Prostate gland (tissue), 2 donors: ENCODE measurements at regions of chr3 and their contacts with region 1.

Region 1: GRCh38 chr3:133927540-133928066 is 31.9 kb upstream of the RAB6B start:
- DNase-seq: peak; percentile 28
- H3K4me3 ChIP-seq: peak overlapping the region; percentile 38 to 49
- H3K27ac ChIP-seq: no peak overlapping the region
- H3K4me1 ChIP-seq: peaks cover 3% of the 10 kb centered on the region
- H3K27me3 ChIP-seq: no peaks in the 10 kb centered on the region
- CTCF ChIP-seq: peak; percentile 69 to 89 (median 84)
- POLR2A ChIP-seq: no peak

Region 2: DNA sequence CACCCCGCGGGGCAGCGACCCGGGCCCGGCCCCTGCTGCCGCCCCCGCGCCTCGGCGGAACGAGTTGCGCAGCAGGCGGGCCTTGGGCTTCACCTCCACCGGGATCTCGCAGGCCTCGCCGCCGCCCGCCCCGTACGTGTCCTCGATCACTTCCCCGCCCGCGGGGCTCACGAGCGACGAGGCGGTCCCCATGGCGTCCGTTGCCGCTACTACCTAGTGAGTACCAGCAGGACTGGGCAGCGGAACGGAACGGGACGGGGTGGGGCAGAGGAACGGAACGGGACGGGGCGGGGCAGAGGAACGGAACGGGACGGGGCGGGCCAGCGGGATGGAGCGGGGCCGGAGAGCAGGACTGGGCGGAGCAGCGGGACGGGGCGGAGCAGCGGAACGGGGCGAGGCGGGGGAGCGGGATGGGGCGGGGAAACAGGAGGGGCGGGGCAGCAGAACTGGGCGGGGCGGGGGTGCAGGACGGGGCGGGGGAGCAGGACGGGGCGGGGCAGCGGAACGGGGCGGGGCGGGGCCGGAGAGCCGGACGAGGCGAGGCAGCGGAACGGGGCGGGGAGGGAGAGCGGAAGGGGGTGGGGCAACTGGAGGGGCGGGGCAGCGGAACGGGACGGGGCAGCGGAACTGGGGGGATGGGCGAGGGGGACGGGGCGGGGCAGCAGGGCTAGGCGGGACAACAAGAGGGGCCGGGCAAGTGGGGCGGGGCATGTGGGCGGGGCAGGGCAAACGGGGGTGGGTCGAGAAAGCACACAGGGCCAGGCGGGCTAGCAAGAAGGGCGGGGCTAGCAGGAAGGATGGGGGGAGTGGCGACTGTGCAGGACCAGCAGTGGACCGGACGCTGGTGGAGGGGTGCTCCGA is 1205.2 kb before region 1 on chr3 and contains the start of gene NPHP3:
- intact Hi-C with region 1: loop called (anchors 10 kb)
- DNase-seq: peak; percentile 97
- H3K4me3 ChIP-seq: peak within 1 kb of the TSS; percentile 81 to 96
- H3K27ac ChIP-seq: peak within 1 kb of the TSS; percentile 90 to 94
- H3K4me1 ChIP-seq: peaks cover 10% of the 10 kb centered on the region
- H3K27me3 ChIP-seq: no peaks in the 10 kb centered on the region
- CTCF ChIP-seq: peak in 2 of 4 experiments; percentile 16 to 40
- POLR2A ChIP-seq: peak; percentile 96
- total RNA-seq, gene NPHP3: 15.1 to 41.1 TPM

Region 3: DNA sequence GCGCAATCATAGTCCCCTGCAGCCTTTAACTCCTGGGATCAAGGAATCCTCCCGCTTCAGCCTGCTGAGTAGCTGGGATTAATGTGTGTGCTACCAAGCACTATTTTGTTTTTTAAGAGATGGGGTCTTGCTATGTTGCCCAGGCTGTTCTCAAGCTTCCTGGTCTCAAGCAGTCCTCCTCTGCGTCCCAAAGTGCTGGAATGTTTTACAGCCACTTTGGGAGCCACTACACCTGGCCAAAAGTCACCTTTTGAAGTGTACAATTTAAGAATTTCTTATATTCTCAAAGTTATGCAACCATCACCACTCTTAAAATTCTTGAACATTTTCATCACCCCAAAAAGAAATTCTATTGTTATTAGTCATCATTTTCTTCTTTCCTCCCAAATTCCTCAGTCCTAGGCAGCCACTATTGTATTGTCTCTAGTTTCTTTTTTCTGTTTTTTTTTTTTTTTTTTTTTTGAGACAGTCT is 336.3 kb before region 1 on chr3:
- intact Hi-C with region 1: no loop called
- DNase-seq: no peak
- H3K4me3 ChIP-seq: no peak overlapping the region
- H3K27ac ChIP-seq: no peak overlapping the region
- H3K4me1 ChIP-seq: peaks cover 8% of the 10 kb centered on the region
- H3K27me3 ChIP-seq: no peaks in the 10 kb centered on the region
- CTCF ChIP-seq: no peak
- POLR2A ChIP-seq: no peak

Region 4: DNA sequence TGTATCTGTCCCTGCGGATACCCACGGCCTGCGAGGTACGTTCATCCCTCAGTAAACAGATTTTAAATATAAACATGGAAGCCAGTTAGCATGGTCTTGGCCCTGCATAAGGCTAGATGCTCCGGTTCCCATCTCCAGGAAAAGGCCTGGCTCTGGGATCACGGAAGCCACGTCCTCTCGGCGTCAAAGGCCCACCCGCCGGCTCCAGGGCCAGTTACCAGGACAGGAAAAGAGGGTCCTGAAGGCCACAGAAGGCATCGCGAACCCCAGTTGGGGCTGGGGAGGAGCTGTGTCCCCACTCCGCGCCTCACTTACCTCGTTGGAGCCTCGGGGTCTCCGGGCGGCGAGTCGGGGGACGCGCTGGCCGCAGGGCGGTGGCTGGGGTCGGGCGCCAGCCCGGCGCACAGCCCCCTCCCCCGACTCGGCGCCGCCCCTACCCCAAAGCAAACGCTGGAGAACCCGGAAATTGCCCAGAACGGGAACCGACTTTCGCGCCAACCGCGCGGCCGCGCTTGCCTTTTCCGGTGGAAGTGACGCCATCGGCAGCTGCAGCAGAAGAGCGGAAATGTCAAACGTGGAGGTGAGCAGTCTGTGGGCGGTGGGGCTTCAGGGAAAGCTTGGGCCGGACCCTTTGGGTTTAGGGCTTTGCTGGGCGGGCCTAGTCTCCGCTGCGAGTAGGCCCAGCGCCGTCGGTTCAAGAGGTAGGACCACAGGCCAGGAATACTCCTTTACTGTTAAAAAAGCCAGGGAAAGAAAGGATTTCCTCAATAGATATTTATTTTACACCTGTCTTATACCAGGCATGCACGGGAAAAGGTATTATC is 265.9 kb before region 1 on chr3 and contains the start of gene TOPBP1:
- intact Hi-C with region 1: loop called (anchors 10 kb)
- DNase-seq: peak; percentile 71
- H3K4me3 ChIP-seq: peak within 1 kb of the TSS; percentile 79 to 82
- H3K27ac ChIP-seq: peak within 1 kb of the TSS; percentile 77 to 85
- H3K4me1 ChIP-seq: no peaks in the 10 kb centered on the region
- H3K27me3 ChIP-seq: no peaks in the 10 kb centered on the region
- CTCF ChIP-seq: no peak
- POLR2A ChIP-seq: no peak
- total RNA-seq, gene TOPBP1: 15.6 to 25.3 TPM

Region 5: GRCh38 chr3:133821767-133822638 is 105.6 kb before region 1 on chr3:
- intact Hi-C with region 1: loop called (anchors 2 kb)
- DNase-seq: no peak
- H3K4me3 ChIP-seq: no peak overlapping the region
- H3K27ac ChIP-seq: no peak overlapping the region
- H3K4me1 ChIP-seq: no peaks in the 10 kb centered on the region
- H3K27me3 ChIP-seq: no peaks in the 10 kb centered on the region
- CTCF ChIP-seq: no peak
- POLR2A ChIP-seq: no peak

Region 6: DNA sequence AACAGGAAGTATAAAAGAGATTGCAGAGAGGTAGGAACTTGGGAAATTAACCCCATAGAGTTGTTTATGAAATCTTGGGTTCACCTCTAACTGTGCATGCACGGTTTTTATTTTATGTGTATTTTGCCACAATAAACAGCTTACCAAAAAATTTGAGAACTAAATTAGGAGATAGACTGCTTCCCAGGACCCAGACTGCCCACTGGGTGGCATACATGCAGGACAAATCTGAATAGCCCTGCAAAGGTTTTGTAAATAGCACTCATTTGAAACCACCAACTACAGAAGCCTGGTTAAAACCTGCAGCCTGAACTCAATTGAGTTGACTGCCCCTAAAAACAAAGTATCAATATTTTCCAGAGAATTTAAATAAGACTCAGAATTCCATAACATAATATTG is 198.6 kb after region 1 on chr3:
- intact Hi-C with region 1: no loop called
- DNase-seq: no peak
- H3K4me3 ChIP-seq: no peak overlapping the region
- H3K27ac ChIP-seq: no peak overlapping the region
- H3K4me1 ChIP-seq: no peaks in the 10 kb centered on the region
- H3K27me3 ChIP-seq: no peaks in the 10 kb centered on the region
- CTCF ChIP-seq: no peak
- POLR2A ChIP-seq: no peak

Region 7: GRCh38 chr3:134212906-134213665 is 285.5 kb after region 1 on chr3:
- intact Hi-C with region 1: loop called (anchors 5 kb)
- DNase-seq: peak; percentile 85
- H3K4me3 ChIP-seq: no peak overlapping the region
- H3K27ac ChIP-seq: no peak overlapping the region
- H3K4me1 ChIP-seq: no peaks in the 10 kb centered on the region
- H3K27me3 ChIP-seq: no peaks in the 10 kb centered on the region
- CTCF ChIP-seq: peak; percentile 91 to 100 (median 94)
- POLR2A ChIP-seq: no peak

Region 8: DNA sequence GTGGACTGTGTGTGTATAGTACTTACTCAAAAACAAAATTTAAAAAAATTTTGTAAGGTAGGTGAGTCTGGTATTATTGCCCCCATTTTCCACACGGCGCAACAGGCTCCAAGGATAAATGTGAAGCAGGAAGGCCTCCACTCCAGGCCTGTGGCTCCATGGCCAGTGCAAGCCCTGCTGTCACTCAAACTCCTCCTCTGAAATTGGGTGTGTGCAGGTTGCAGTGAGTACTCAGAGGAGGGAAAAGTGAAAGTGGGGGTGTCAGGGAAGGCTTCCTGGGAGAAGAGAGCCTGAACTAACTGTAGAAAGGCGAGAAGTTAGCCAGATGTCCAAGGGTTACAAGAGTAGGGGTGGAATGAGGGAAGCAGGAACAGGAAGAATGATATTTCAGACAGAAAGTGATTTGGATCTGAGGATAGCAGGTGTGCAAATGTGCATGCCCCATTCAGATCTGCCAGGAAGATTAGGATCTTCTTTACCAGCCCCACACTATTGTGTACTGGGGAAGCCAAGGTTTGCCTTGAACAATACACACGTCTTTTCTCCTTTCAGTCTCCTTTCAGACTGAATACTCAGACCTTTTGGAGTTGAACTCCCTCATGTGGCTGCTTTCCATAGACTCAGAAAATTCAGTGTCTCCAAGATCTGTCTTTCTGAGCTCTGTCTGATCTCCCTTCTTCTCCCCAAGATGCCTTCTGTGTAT is 371.7 kb after region 1 on chr3:
- intact Hi-C with region 1: loop called (anchors 5 kb)
- DNase-seq: no peak
- H3K4me3 ChIP-seq: no peak overlapping the region
- H3K27ac ChIP-seq: no peak overlapping the region
- H3K4me1 ChIP-seq: no peaks in the 10 kb centered on the region
- H3K27me3 ChIP-seq: no peaks in the 10 kb centered on the region
- CTCF ChIP-seq: peak in 3 of 4 experiments; percentile 39 to 64 (median 56)
- POLR2A ChIP-seq: no peak

Region 9: GRCh38 chr3:134473868-134474546 is 546.4 kb after region 1 on chr3:
- intact Hi-C with region 1: loop called (anchors 10 kb)
- DNase-seq: peak; percentile 86
- H3K4me3 ChIP-seq: no peak overlapping the region
- H3K27ac ChIP-seq: no peak overlapping the region
- H3K4me1 ChIP-seq: no peaks in the 10 kb centered on the region
- H3K27me3 ChIP-seq: no peaks in the 10 kb centered on the region
- CTCF ChIP-seq: peak; percentile 46 to 93 (median 90)
- POLR2A ChIP-seq: no peak